HepG2 (cell line): ENCODE measurements at regions of chr4 and their contacts with region 1.

Region 1: GRCh38 chr4:94595879-94596483 is 144.2 kb downstream of the PDLIM5 start:
- DNase-seq: peak; percentile 48
- ATAC-seq: 0 out of 3 replicates have a peak, but pooled peaks have one; percentile 51
- H3K4me3 ChIP-seq: no peak overlapping the region
- H3K27ac ChIP-seq: no peak overlapping the region
- H3K4me1 ChIP-seq: no peaks in the 10 kb centered on the region
- H3K27me3 ChIP-seq: no peaks in the 10 kb centered on the region
- CTCF ChIP-seq: peak; percentile 65
- EP300 ChIP-seq: no peak
- POLR2A ChIP-seq: no peak
- RAD21 ChIP-seq: peak; percentile 70

Region 2: DNA sequence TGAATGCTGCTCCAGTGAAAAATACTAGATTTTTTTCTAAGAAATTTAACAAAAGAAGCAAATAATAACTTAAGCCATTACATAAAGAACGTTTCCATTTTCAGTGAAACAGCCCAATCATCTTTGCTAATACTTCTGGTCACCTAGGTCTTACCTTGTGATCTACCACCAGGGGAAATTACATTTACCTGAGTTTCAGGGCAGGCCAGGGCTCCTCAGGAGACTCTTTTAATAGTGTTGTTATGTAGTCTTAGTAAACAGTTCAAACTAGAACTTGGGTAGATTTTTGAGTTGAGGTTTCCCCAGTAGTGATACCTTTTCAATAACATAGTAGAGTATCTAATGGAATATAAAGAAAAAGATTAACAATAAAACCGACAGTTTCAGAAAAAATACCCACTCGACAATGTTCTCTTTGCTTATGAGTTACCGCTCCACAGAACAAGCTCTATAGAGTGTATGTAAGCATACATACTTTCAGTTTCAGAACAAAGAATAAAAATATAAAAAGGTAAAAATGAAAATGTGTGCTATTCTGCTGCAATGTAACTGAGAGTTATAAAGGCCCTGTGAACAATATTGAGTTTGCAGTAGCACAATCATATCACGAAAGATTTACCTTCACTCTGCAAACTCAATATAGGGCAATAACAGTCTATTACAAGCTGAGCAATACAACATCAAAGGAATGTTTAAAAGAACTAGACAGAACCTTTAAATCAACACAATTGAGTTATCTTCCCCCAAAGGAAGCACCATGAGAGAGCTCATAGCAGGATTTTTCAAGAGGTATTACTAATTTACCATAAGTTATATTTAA is 601.6 kb before region 1 on chr4:
- CTCF ChIA-PET with region 1: no interaction called
- POLR2A ChIA-PET with region 1: no interaction called
- in situ Hi-C with region 1: no loop called
- intact Hi-C with region 1: no loop called
- DNase-seq: no peak
- ATAC-seq: no peak
- H3K4me3 ChIP-seq: no peak overlapping the region
- H3K27ac ChIP-seq: no peak overlapping the region
- H3K4me1 ChIP-seq: no peaks in the 10 kb centered on the region
- H3K27me3 ChIP-seq: no peaks in the 10 kb centered on the region
- CTCF ChIP-seq: no peak
- EP300 ChIP-seq: no peak
- POLR2A ChIP-seq: no peak
- RAD21 ChIP-seq: no peak

Region 3: DNA sequence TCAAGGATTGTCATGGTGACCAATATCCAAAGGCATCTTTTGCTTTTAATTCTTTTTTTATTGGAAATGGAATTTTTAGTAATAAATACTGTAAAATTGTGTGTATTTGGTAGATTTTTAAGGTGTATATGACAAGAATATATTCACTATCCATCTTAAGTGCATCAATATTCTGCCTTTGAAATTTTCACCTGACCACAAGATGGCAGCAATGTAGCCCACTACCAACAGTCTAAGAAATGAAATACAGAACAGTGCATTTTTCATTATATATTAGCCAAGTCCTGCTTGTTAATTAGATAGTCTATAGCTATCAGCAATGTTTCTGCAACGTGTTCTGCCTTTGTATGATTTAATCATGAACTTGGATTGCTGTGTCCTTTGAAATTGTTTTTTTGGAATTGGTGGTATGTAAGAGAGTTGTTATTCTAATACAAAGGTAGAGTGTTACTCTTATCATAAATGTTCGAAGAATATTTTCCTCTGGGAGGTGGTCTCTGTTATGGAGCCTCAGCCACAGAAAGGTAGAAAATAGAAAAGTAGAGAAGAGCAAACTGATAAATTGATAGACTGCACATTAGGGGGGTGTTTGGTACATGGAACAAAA is 291.5 kb before region 1 on chr4:
- CTCF ChIA-PET with region 1: interaction called, 13 read pairs
- POLR2A ChIA-PET with region 1: no interaction called
- in situ Hi-C with region 1: loop called (anchors 10 kb)
- intact Hi-C with region 1: loop called (anchors 1 kb)
- DNase-seq: peak; percentile 21
- ATAC-seq: peak; percentile 79
- H3K4me3 ChIP-seq: no peak overlapping the region
- H3K27ac ChIP-seq: no peak overlapping the region
- H3K4me1 ChIP-seq: peaks cover 19% of the 10 kb centered on the region
- H3K27me3 ChIP-seq: no peaks in the 10 kb centered on the region
- CTCF ChIP-seq: peak; percentile 69
- EP300 ChIP-seq: no peak
- POLR2A ChIP-seq: no peak
- RAD21 ChIP-seq: peak; percentile 52; the same call in 1 of the 2 replicates

Region 4: GRCh38 chr4:94406668-94407437 is 189.1 kb before region 1 on chr4:
- CTCF ChIA-PET with region 1: interaction called, 28 read pairs
- POLR2A ChIA-PET with region 1: no interaction called
- in situ Hi-C with region 1: loop called (anchors 5 kb)
- intact Hi-C with region 1: loop called (anchors 1 kb)
- DNase-seq: peak; percentile 73
- ATAC-seq: peak; percentile 68
- H3K4me3 ChIP-seq: no peak overlapping the region
- H3K27ac ChIP-seq: no peak overlapping the region
- H3K4me1 ChIP-seq: peaks cover 30% of the 10 kb centered on the region
- H3K27me3 ChIP-seq: no peaks in the 10 kb centered on the region
- CTCF ChIP-seq: peak; percentile 83
- EP300 ChIP-seq: no peak
- POLR2A ChIP-seq: no peak
- RAD21 ChIP-seq: peak; percentile 75

Region 5: GRCh38 chr4:94497690-94498089 is 98.3 kb before region 1 on chr4:
- CTCF ChIA-PET with region 1: no interaction called
- POLR2A ChIA-PET with region 1: no interaction called
- in situ Hi-C with region 1: no loop called
- intact Hi-C with region 1: loop called (anchors 5 kb)
- DNase-seq: no peak
- ATAC-seq: no peak
- H3K4me3 ChIP-seq: no peak overlapping the region
- H3K27ac ChIP-seq: no peak overlapping the region
- H3K4me1 ChIP-seq: no peaks in the 10 kb centered on the region
- H3K27me3 ChIP-seq: no peaks in the 10 kb centered on the region
- CTCF ChIP-seq: no peak
- EP300 ChIP-seq: no peak
- POLR2A ChIP-seq: no peak
- RAD21 ChIP-seq: no peak